ENCODE measurements at regions of chr1 and their contacts with region 1.

Region 1: GRCh38 chr1:234610348-234611152 is 572 bp upstream of the IRF2BP2 start:
- DNase-seq: peak; percentile 95
- ATAC-seq: peak; percentile 50
- H3K4me3 ChIP-seq: peak overlapping the region; percentile 54 to 95 (median 70)
- H3K4me3 Mint-ChIP-seq: peak overlapping the region; percentile 98
- H3K27ac ChIP-seq: peak overlapping the region; percentile 78 to 94
- H3K27ac Mint-ChIP-seq: peak overlapping the region; percentile 99
- H3K4me1 ChIP-seq: peaks cover 46 to 49% of the 10 kb centered on the region in 2 donors
- H3K4me1 Mint-ChIP-seq: peaks cover 56% of the 10 kb centered on the region
- H3K27me3 ChIP-seq: no peaks in the 10 kb centered on the region
- H3K27me3 Mint-ChIP-seq: no peaks in the 10 kb centered on the region
- CTCF ChIP-seq: no peak

Region 2: DNA sequence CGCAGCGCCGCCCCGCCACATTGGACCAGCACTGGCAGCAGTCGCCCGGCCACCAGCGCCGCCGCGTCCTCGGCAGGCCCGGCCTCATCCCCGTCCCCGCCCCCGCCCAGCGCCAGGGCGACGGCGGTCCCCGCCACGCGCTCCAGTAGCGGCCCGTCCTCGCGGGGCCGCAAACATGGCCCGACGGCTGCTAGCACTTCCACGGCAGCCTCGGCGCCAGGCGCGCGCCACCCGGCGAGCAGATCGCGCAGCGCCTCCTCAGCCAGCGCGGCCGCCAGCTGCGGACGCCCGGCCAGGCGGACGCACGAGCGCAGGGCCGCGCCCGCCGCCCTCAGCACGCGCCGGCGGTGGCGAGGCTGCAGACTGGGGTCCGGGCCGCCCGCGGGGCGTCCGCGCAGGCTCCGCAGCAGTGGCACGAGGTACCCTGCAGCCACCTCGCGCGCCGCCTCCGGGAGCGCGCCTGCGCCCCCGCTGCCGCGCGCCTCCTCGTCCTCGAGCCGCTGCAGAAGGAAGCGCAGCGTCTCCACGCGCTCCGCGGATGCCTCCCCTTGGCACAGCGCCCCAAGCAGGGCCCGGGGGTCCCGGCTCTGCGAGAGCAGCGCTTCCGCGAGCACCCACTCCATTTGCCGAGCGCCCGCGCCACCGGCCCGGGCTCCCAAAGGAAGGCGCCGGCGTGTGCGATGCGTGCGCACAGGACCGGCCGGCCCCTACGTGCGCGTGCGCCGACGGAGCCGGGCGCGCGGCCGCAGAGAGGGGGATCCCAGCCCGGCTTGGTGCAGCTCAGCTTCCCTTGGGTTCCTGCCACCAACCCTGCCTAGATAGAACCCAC is 131.9 kb before region 1 on chr1 and contains the start of gene TARBP1:
- CTCF ChIA-PET with region 1: interaction called, 3 read pairs
- POLR2A ChIA-PET with region 1: no interaction called
- intact Hi-C with region 1: loop called (anchors 1 kb)
- DNase-seq: peak; percentile 93
- ATAC-seq: peak; percentile 68
- H3K4me3 ChIP-seq: peak within 1 kb of the TSS; percentile 46 to 76 (median 68)
- H3K4me3 Mint-ChIP-seq: peak within 1 kb of the TSS; percentile 87
- H3K27ac ChIP-seq: peak within 1 kb of the TSS; percentile 49 to 69
- H3K27ac Mint-ChIP-seq: peak within 1 kb of the TSS; percentile 89
- H3K4me1 ChIP-seq: peaks cover 30 to 36% of the 10 kb centered on the region in 2 donors
- H3K4me1 Mint-ChIP-seq: peaks cover 38% of the 10 kb centered on the region
- H3K27me3 ChIP-seq: no peaks in the 10 kb centered on the region
- H3K27me3 Mint-ChIP-seq: peaks cover 6% of the 10 kb centered on the region
- CTCF ChIP-seq: no peak
- total RNA-seq, gene TARBP1: 35.4 and 36.0 TPM in 2 replicates

Region 3: DNA sequence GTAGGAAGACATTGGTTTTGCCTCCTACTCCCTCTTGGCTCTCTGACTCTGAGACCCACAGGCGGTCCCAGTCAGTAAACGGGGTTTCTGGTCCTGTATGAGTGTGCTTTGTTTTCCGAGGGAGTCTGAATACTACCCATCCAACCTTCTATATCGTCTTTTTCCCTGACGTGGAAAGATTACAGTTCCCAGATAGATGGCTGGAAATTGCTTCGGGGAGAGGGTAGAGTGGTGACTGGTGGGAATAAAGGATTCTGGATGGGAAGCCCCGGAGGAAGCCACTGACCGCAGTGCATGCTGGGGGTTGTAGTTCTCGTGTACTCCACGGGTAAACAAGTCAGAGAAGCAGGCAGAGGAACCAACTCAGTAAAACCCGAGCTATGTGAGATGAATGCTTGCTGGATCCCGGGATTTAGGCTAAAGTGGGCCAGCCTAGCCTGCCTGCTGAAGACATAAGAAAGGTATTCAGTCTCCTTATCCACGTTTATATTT is 65.6 kb after region 1 on chr1:
- CTCF ChIA-PET with region 1: interaction called, 4 read pairs
- POLR2A ChIA-PET with region 1: no interaction called
- intact Hi-C with region 1: loop called (anchors 2 kb)
- DNase-seq: peak; percentile 68
- ATAC-seq: peak; percentile 89
- H3K4me3 ChIP-seq: peak overlapping the region; percentile 49 to 80 (median 64)
- H3K4me3 Mint-ChIP-seq: peak overlapping the region; percentile 94
- H3K27ac ChIP-seq: no peak overlapping the region
- H3K27ac Mint-ChIP-seq: peak overlapping the region; percentile 76
- H3K4me1 ChIP-seq: peaks cover 7 to 8% of the 10 kb centered on the region in 2 donors
- H3K4me1 Mint-ChIP-seq: peaks cover 16% of the 10 kb centered on the region
- H3K27me3 ChIP-seq: no peaks in the 10 kb centered on the region
- H3K27me3 Mint-ChIP-seq: no peaks in the 10 kb centered on the region
- CTCF ChIP-seq: no peak

Region 4: GRCh38 chr1:234772345-234773147 is 162.0 kb after region 1 on chr1:
- CTCF ChIA-PET with region 1: interaction called, 4 read pairs
- POLR2A ChIA-PET with region 1: interaction called, 26 read pairs
- intact Hi-C with region 1: loop called (anchors 1 kb)
- DNase-seq: peak; percentile 83
- ATAC-seq: peak; percentile 83
- H3K4me3 ChIP-seq: peak overlapping the region; percentile 2 to 49 (median 33)
- H3K4me3 Mint-ChIP-seq: peak overlapping the region; percentile 82
- H3K27ac ChIP-seq: peak overlapping the region; percentile 90 to 91
- H3K27ac Mint-ChIP-seq: peak overlapping the region; percentile 95
- H3K4me1 ChIP-seq: peaks cover 29 to 39% of the 10 kb centered on the region in 2 donors
- H3K4me1 Mint-ChIP-seq: peaks cover 49% of the 10 kb centered on the region
- H3K27me3 ChIP-seq: peaks cover 0 to 9% (median 5%) of the 10 kb centered on the region in 4 experiments
- H3K27me3 Mint-ChIP-seq: no peaks in the 10 kb centered on the region
- CTCF ChIP-seq: no peak

Region 5: DNA sequence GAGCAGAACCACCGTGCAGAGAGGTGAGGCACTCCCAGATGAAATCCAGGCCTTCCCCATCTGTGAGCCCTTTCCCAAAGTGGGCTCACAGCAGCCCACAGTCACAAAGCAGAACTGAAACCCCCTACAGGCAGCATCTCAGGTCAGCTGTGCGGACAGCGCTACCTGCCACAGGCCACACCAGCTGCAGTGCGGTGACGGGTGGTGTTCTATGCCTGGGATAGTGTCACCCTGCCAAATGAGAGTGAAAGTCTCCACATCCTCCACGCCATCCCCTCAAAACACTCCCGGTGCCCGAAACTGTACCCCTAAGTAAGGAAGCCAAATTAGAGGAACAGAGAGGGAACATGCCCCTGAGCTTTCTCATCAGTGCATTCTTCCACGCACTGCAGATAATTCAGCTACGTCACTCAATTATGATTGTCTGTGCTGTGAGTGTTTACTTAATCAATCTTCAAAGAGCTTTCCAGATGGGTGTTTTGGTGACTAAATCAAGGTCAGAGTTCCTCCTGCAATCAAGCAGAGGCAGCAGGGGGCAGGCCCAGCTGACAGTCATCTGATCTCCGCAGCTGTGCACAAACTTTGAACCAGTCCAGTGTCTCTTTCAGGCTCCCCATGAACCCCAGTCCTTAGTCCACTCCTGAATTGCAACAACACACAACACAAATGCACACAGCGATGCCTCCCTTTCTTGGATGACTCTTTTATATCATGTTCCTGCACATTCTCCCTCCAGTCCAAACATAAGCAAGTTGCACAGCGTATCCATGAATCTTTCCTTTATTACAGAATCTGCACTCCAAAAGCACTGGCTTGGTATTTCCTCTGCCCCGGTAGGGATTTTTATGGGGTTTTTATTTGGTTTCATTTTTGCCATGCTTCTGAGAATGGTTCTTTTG is 368.1 kb after region 1 on chr1:
- CTCF ChIA-PET with region 1: interaction called, 14 read pairs
- POLR2A ChIA-PET with region 1: interaction called, 6 read pairs
- intact Hi-C with region 1: loop called (anchors 2 kb)
- DNase-seq: peak; percentile 87
- ATAC-seq: peak; percentile 74
- H3K4me3 ChIP-seq: peak overlapping the region in 3 of 5 experiments; percentile 18 to 42 (median 34)
- H3K4me3 Mint-ChIP-seq: peak overlapping the region; percentile 88
- H3K27ac ChIP-seq: peak overlapping the region; percentile 64 to 73
- H3K27ac Mint-ChIP-seq: peak overlapping the region; percentile 98
- H3K4me1 ChIP-seq: peaks cover 42 to 52% of the 10 kb centered on the region in 2 donors
- H3K4me1 Mint-ChIP-seq: peaks cover 62% of the 10 kb centered on the region
- H3K27me3 ChIP-seq: no peaks in the 10 kb centered on the region
- H3K27me3 Mint-ChIP-seq: no peaks in the 10 kb centered on the region
- CTCF ChIP-seq: peak; percentile 22

Region 6: DNA sequence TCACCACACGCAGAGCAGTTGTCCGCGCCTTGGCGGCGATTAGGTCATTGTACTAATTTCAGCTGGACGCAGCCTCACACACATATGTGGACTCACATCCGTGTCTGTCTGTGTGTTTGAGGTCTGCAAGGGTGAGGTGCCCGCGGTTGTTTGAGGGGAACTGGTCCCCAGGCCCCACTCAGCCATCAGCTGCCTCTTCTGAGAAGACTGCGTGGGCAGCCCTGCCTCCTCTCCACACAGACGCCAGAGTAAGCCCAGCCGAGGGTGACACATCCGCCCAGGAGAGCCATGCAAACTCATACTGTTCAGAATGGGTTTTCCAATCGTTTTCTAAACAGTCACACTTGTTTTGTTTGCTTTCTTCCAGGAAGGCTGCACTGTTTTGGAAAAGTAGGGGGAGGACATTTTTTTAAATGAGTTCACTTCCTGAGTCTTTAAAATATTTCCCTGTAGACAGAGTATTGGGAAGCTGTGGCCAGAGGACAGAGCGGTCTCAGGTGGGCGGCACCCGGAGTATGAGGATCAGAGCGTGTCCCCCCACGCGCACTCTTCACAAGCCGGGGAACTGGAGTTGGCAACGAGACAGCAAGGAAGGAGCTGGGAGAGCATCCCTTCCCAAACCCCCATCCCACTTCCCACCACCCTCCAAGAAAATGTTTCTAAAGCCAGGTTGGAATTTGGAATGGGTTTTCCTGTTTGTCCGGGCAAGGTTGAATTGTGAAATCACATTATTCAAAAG is 464.8 kb after region 1 on chr1:
- CTCF ChIA-PET with region 1: interaction called, 3 read pairs
- POLR2A ChIA-PET with region 1: no interaction called
- intact Hi-C with region 1: loop called (anchors 2 kb)
- DNase-seq: peak; percentile 70
- ATAC-seq: peak; percentile 72
- H3K4me3 ChIP-seq: peak overlapping the region in 4 of 5 experiments; percentile 1 to 42 (median 27)
- H3K4me3 Mint-ChIP-seq: peak overlapping the region; percentile 81
- H3K27ac ChIP-seq: peak overlapping the region; percentile 5 to 10
- H3K27ac Mint-ChIP-seq: peak overlapping the region; percentile 98
- H3K4me1 ChIP-seq: peaks cover 17 to 31% of the 10 kb centered on the region in 2 donors
- H3K4me1 Mint-ChIP-seq: peaks cover 33% of the 10 kb centered on the region
- H3K27me3 ChIP-seq: no peaks in the 10 kb centered on the region
- H3K27me3 Mint-ChIP-seq: no peaks in the 10 kb centered on the region
- CTCF ChIP-seq: no peak

Measured in B cell (primary cell).